ENCODE measurements at regions of chr13 and their contacts with region 1.

Region 1: GRCh38 chr13:51583875-51584730 is at the start of gene WDFY2:
- DNase-seq: peak; percentile 100
- total RNA-seq, gene WDFY2: 10.6 to 13.0 TPM

Region 2: DNA sequence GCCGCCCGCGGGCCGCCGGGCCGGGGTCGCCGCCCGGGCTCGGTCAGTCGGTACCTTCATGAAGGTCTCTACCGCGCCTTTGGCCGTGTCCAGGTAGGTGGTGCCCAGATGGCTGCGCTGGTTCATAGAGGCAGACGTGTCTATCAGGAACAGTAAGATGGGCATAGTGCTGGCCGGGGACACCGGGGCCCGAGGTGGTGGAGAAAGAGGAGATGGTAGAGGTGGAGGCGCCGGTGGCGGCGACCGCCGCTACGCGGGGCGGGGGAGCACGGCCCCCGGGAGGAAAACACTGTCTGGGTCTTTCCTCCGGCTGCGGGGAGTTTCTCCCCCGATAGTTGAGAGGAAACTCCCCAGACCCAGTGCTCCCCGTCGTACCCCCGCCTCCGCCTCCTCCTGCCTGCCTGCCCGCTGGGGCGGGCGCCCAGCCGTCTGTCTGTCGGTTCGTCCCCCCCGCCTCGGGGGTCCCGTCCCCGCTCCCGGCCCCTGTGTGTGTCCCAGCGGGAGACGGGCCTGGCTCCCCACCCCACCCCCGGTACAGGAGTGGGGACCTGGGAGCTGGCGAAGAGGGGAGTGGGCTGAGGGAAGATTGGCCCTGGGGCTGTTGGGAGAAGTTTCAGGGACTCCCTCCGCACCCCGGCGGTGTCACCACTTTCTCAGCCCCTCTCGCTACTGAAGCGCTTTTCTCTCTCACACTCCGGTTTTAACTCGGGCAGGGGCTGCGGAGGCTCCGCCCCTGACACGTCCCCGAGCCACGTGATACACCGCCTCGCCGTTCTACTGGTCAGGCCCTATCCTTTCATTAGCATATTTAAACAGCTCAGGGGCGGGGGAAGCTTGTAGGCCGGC is 131.5 kb before region 1 on chr13 and contains the start of gene INTS6:
- intact Hi-C with region 1: loop called in 1 of 2 experiments (anchors 5 kb)
- DNase-seq: peak; percentile 100
- total RNA-seq, gene INTS6: 27.0 to 29.1 TPM